Cardiac septum (tissue), 1 donor: ENCODE measurements at regions of chr10 and their contacts with region 1.

Region 1: GRCh38 chr10:98467506-98468346 is 21.0 kb upstream of the HPS1 start:
- DNase-seq: peak; percentile 85

Region 2: DNA sequence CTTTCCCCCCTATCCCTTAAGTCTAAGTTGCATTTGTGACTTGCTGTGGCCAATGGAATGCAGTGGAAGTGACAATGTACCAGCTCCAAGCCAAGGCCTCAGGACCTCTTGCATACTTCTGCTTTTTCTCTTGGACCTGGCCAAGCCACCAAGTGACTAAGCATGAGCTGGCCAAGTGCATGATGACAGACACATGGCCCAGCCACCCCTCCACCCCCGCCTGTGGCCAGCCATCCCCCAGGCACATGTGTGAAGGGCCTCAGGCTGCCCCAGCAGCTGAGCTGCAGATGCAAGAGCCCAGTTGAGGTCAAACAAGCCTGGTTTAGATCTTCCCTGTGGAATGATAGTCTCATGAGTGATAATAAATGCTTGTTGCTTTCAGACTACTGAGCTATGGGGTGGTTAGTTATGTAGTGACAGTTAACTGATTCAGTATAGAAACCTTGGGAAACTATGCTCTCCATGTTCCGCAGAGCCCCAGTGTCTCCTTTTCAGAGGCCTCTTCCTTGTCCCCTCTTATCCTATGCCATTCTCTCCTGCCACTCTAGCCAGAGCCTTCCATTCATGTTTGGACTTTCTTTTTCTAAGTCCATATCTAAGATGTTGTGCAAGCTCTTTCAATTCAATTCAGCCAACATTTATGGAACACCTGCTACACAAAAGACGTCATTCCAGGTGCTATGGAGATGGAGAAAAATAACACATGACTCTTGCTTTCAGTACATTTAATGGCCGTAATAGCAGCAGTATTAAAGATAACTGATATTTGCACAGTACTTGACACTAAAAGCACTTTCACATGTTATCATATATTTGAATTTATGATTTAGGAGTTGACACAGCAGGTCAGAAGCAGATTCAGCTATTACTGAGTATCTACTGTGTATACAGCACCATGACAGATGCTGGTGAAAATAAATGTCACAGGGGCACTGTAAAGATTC is 144.2 kb before region 1 on chr10:
- intact Hi-C with region 1: loop called (anchors 10 kb)
- DNase-seq: peak; percentile 87

Region 3: DNA sequence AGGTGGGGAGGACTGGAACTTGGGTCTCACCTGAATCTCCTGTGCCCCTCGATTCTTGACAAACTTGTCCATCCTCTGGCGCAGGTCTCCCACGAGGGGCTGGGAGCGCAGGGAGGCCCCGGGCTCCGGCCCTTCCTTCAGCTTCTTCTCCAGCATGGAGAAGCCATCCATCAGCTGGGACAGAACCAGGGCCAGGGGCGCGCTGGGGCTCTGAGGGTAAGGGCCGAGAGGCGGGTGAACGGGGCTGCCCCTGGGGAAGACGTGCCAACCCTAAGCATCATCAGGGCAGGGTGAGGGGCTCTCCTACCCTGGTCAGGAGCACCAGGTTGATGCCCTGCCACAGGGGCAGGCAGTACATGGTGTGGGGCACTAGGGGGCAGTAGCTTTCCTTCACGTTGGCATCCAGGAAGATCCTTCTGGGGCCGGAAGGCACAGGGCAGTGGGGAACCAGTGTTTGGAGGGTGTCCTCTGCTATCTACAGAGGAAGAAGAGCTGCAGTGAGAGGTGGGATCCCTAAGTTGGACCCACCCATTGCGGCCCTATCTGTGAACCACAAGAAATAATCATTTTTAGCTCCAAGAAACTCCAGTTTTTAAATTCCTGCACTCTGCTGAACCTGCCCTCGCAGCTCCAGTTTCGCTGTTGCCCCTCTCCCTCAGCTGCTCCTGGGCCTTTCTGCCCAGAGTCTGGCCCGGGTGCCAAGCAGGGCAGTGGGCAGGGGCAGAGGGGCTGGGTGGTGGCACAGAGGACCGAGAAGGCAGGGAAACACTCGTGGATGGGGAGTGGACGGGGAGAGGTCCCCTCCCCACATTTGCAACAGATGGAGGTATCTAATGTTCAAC is 42.0 kb before region 1 on chr10:
- intact Hi-C with region 1: loop called (anchors 5 kb)
- DNase-seq: no peak

Region 4: DNA sequence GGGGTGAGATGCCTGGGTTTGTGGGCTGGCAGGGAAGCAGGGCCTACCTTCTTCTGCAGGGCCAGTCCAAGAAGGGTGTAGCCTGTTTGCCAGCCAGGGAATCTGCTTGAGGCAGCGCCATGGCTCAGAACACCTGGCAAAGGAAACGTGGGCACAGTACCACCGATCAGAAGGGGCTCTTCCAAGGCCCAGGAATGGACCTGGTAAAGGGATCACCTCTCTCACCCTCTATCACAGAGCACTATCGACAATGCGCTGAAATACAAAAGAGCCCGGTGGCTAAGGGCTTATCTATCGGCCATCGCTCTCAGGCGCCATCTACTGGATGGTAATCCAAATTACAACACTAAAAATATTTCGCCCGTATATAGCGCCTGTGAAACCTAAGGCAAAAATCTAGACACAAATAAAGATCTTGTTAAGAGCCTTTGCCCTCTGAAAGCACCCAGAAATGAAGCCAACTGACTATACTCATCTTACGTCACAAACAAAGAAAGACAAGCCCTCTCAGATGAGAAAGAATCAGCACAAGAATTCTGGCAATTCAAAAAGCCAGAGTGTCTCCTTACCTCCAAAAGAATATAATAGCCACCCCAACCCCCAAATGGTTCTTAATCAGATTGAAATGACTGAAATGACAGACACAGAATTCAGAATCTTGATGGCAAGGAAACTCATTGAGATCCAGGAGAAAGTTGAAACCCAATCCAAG is 196.8 kb after region 1 on chr10:
- intact Hi-C with region 1: loop called (anchors 2 kb)
- DNase-seq: no peak

Region 5: DNA sequence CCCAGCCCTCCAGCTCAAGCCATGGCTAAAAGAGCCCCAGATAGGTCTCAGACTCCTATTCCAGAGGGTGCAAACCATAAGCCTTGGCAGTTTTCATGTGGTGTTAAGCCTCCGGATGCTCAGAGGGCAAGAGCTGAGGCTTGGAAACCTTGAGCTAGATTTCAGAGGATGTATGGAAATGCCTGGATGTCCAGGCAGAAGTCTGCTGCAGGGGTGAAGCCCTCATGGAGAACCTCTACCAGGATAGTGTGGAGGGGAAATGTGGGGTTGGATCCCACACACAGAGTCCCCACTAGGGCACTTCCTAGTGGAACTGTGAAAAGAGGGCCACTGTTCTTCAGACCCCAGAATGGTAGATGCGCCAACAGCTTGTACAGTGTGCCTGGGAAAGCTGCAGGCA is 781.1 kb after region 1 on chr10:
- intact Hi-C with region 1: loop called (anchors 2 kb)
- DNase-seq: no peak